GM10248 (cell line): ENCODE measurements at regions of chr14 and their contacts with region 1.

Region 1: GRCh38 chr14:75654127-75654732 is 6.4 kb downstream of the ERG28 start:
- DNase-seq: peak; percentile 80
- CTCF ChIP-seq: peak; percentile 93

Region 2: GRCh38 chr14:75514673-75515628 is 139.3 kb before region 1 on chr14:
- CTCF ChIA-PET with region 1: interaction called, 10 read pairs
- POLR2A ChIA-PET with region 1: no interaction called
- DNase-seq: peak; percentile 60
- CTCF ChIP-seq: no peak

Region 3: GRCh38 chr14:75560962-75561432 is 93.2 kb before region 1 on chr14:
- CTCF ChIA-PET with region 1: interaction called, 17 read pairs
- POLR2A ChIA-PET with region 1: no interaction called
- DNase-seq: peak; percentile 61
- CTCF ChIP-seq: peak; percentile 76

Region 4: GRCh38 chr14:75614176-75614575 is 40.1 kb before region 1 on chr14:
- CTCF ChIA-PET with region 1: interaction called, 16 read pairs
- POLR2A ChIA-PET with region 1: no interaction called
- DNase-seq: no peak
- CTCF ChIP-seq: no peak

Region 5: DNA sequence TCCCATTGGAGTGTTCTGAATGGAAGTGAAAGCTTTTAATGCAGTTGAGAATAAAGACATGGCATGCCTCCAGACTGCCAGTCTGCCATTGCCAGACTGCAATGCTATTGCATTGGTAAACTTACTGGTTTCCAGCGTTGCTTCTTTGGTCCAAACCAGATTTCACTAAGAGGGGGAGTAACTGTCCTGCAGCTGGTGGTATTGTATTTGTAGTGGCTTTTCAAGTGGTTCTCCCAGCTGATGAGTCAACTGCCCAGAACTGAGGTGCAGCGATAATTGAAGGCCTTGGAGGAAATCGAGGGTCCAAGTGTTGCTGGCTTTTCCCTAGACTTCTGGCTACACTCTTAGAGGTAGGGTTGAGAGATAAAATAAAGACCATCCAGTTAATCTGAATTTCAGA is 25.4 kb before region 1 on chr14:
- CTCF ChIA-PET with region 1: interaction called, 12 read pairs
- POLR2A ChIA-PET with region 1: no interaction called
- DNase-seq: no peak
- CTCF ChIP-seq: no peak

Region 6: GRCh38 chr14:75642056-75642455 is 12.2 kb before region 1 on chr14:
- CTCF ChIA-PET with region 1: interaction called, 37 read pairs
- POLR2A ChIA-PET with region 1: no interaction called
- DNase-seq: no peak
- CTCF ChIP-seq: no peak

Region 7: DNA sequence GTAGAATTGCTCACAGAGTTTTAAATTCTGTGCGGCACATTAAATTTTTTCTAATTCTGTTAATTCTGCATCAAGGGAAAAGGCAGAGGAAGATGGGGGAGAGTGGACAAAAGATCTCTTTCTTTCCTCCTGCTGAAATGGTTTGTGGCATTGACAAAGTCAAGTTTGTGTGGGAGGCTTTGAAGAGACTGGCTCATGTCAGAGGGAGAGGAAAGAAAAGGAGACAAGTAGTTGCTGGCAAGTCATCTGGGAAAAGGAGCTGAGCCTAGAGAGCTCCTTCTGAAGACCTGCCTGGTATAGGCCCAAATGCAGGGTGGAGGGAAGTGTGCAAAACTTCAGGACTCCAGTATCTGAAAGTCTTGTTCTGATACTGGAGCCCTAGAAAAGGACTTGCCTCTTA is 43.2 kb after region 1 on chr14:
- CTCF ChIA-PET with region 1: no interaction called
- POLR2A ChIA-PET with region 1: no interaction called
- DNase-seq: no peak
- CTCF ChIP-seq: no peak

Region 8: DNA sequence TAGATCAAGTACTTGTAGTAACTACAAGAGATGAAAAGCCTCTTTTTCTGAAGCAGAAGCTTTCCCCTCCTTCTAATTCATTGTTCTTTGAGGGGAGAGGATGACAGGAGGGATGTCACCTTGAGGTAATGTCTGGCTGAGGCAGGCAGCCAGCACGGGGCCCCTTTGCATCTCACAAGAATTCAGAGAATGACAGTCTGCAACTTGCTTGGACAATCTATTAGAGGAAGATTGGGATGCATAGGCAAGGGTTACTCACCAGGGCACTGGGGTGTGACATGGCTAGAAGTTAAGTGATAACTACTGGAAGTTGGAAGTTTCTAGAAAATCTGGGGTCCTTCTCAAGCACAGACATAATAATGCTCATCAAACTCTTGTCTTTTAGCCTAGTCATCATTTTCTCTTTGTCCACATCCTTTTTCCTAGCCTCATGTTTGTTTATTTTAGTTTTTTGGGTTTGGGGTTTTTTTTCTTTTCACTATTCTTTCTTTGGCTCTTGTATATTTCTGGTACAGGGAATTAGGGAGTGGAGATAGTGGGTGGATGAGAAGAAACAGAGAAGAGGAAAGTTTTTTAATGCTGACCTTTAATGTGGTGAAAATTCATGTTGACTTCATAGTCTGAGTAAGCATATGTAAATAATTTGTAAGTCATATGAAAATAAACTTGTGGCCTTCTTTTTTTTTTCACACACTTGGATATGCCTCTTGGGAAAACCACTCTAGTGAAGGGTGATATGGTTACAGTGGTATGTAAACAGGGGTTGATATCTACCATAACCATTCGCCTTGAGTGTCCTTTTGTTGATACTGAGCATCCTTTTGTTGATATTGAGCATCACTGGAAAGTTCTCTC is 61.9 kb after region 1 on chr14:
- CTCF ChIA-PET with region 1: no interaction called
- POLR2A ChIA-PET with region 1: no interaction called
- DNase-seq: no peak
- CTCF ChIP-seq: no peak